Common myeloid progenitor, CD34-positive (primary cell): ENCODE measurements at regions of chr17 and their contacts with region 1.

Region 1: GRCh38 chr17:44400226-44400847 is 10.9 kb upstream of the ITGA2B start:
- DNase-seq: peak; percentile 37 to 49 (median 47)
- H3K4me3 ChIP-seq: no peak overlapping the region
- H3K27ac ChIP-seq: no peak overlapping the region
- H3K4me1 ChIP-seq: no peaks in the 10 kb centered on the region
- H3K27me3 ChIP-seq: no peaks in the 10 kb centered on the region

Region 2: DNA sequence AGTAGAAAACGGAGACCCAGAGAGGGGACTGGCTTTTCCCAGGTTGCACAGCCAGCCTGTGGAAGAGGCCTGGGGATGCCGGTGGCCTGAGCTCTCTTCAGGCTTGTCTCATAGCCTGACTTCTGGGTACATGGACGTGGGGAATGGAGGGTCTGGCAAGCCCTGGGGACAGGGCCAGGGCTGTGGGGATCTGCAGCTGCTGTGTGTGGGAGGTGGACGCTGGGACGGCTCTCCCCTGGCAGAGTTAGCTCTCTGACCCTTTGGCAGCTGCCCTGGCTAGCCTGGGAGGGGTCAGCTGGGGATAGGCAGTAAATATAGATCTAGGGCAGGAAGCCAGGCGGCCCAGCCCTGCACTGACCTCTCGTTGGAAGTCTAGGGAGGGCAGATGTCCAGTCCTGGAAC is 152.9 kb before region 1 on chr17:
- CTCF ChIA-PET with region 1: no interaction called
- POLR2A ChIA-PET with region 1: no interaction called
- DNase-seq: no peak
- H3K4me3 ChIP-seq: no peak overlapping the region
- H3K27ac ChIP-seq: no peak overlapping the region
- H3K4me1 ChIP-seq: peaks cover 8 to 41% (median 31%) of the 10 kb centered on the region in 4 experiments
- H3K27me3 ChIP-seq: no peaks in the 10 kb centered on the region

Region 3: DNA sequence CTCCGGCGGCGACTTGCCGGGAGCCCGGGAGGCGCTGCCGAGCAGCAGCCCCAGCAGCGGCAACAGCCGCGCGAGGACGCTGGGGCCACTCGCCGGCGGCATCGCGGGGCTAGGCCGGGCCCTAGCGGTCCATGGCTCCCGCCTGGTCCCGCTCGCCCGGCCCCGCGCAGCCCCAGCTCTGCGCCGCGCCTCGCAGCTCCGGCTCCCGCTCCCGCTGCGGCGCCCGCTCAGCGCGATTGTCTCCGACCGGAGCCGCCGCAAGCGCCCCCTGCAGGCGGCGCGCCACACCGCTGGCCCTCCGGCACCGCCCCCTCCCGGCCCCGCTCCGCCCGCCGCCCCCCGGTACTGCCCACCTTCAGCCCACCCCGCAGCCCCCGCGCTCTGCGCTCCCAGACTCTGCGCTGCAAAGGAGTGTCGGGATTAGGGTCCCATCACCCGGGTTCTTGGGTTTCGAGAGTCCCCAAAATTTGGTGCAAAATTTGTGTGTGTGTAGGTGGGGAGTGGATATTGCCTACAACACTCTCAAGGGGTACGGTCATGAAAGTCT is 36.7 kb before region 1 on chr17 and contains the start of gene FAM171A2:
- CTCF ChIA-PET with region 1: interaction called, 20 read pairs
- POLR2A ChIA-PET with region 1: no interaction called
- DNase-seq: peak; percentile 66 to 75 (median 74)
- H3K4me3 ChIP-seq: peak within 1 kb of the TSS; percentile 57 to 84 (median 70)
- H3K27ac ChIP-seq: peak within 1 kb of the TSS in 1 of 2 experiments; percentile 54
- H3K4me1 ChIP-seq: peaks cover 0 to 32% (median 18%) of the 10 kb centered on the region in 4 experiments
- H3K27me3 ChIP-seq: peaks cover 0 to 3% (median 0%) of the 10 kb centered on the region in 5 experiments

Region 4: DNA sequence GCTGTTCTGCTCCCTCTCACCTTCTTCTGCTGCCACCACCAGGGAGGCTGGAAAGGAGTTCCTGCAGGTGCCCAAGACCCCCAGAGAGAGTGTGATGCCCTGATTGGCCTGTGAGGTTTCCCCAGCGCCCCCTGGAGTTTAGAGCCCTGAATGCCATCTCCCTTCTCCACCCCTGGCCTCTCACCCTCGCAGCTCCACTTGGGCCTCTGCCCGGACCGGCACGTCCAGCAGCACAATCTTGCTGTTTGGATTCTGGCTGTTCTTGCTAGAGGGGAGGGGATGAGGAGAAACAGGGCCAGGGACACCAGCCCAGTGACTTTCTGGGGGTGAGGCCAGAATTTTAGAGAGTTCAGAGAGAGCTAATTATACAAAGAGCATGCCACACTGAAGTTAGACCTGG is 24.2 kb before region 1 on chr17:
- CTCF ChIA-PET with region 1: interaction called, 11 read pairs
- POLR2A ChIA-PET with region 1: no interaction called
- DNase-seq: peak in 1 of 3 donors; percentile 28
- H3K4me3 ChIP-seq: no peak overlapping the region
- H3K27ac ChIP-seq: no peak overlapping the region
- H3K4me1 ChIP-seq: peaks cover 0 to 10% (median 4%) of the 10 kb centered on the region in 4 experiments
- H3K27me3 ChIP-seq: peaks cover 0 to 3% (median 0%) of the 10 kb centered on the region in 5 experiments

Region 5: DNA sequence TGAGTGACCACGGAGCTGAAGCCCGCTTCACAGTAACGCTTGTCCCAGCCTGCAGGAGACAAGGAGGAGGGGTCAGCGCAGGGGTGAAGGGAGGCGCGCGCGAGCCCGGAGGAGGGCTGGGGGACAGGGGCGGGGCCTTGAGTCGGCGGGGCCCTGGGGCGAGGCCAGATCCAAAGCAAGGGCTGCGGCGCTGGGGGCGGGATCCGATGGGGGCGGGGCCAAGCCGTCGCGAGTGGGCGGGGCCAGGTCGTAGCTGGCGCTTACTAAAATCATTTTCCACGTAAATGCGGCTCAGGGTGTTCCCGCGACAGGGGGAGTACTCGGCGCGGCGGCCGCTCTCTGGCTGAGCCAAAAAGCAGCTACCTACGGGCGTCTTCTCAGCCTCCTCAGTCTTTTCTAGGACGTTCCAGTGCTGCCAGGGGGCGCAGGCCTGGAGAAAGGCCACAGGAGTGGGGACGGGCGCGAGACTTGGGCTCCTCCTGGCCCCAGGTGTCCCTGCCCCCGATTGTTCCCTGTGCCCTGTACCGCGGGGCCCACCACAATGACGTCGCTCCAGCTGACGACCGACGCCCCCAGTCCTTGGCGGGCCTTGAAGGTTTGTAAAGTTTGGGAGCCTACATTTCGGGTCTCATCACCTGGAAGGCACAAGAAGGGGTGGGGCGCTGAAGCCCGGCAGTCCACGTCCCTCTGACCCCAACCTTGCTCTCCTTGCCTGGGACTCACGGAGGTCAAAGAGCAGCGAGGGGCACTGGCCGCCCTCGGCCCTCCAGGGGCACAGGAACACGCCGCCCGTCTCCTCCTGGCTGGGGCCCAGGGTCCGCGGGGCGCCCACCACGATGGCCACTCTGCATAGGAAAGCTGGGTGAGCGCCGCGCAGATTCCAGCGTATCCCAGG is 14.8 kb before region 1 on chr17:
- CTCF ChIA-PET with region 1: interaction called, 76 read pairs
- POLR2A ChIA-PET with region 1: interaction called, 3 read pairs
- DNase-seq: peak; percentile 92 to 94 (median 93)
- H3K4me3 ChIP-seq: peak overlapping the region; percentile 23 to 83 (median 66)
- H3K27ac ChIP-seq: peak overlapping the region; percentile 33 to 68
- H3K4me1 ChIP-seq: peaks cover 7 to 54% (median 38%) of the 10 kb centered on the region in 4 experiments
- H3K27me3 ChIP-seq: peaks cover 0 to 3% (median 0%) of the 10 kb centered on the region in 5 experiments

Region 6: DNA sequence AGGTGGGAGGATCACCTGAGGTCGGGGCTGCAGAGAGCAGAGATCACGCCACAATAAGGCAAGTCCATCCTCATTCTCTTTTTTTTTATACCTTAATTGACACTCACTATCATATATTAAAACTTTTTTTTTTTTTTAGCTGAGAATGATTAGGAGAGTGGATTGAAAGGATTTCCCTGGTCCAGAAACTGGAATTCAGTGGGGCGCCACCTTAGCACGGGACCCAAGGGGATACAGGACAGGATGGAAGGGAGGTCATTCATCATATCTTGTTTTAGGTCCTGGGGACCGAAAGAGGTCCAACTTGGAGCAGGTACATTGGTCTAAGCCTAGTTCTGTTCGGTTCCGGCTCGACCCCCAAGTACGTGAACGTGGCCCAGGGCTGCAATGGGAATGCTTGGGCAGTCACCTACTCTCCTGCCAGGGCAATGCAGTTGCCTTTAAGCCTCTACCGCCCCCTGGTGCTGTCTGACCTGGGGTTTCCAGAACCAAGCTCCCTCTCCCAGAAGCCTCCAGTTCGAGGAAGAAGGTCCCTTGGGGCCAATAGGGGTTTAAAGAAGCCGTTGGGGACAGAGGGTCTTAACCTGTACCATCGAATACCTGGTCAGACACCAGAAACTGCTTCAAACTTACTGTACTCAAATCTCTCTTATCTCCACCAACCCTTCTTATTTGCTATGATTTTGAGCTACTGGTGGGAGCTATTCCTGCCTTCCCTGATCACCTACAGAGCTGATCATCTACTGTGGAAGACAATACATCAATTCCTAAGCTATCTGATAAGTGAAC is 122.7 kb after region 1 on chr17:
- CTCF ChIA-PET with region 1: interaction called, 14 read pairs
- POLR2A ChIA-PET with region 1: no interaction called
- DNase-seq: peak; percentile 78 to 83 (median 81)
- H3K4me3 ChIP-seq: peak overlapping the region in 1 of 7 experiments; percentile 42
- H3K27ac ChIP-seq: no peak overlapping the region
- H3K4me1 ChIP-seq: peaks cover 0 to 4% (median 2%) of the 10 kb centered on the region in 4 experiments
- H3K27me3 ChIP-seq: no peaks in the 10 kb centered on the region